ENCODE measurements at regions of chr22 and their contacts with region 1.

Region 1: DNA sequence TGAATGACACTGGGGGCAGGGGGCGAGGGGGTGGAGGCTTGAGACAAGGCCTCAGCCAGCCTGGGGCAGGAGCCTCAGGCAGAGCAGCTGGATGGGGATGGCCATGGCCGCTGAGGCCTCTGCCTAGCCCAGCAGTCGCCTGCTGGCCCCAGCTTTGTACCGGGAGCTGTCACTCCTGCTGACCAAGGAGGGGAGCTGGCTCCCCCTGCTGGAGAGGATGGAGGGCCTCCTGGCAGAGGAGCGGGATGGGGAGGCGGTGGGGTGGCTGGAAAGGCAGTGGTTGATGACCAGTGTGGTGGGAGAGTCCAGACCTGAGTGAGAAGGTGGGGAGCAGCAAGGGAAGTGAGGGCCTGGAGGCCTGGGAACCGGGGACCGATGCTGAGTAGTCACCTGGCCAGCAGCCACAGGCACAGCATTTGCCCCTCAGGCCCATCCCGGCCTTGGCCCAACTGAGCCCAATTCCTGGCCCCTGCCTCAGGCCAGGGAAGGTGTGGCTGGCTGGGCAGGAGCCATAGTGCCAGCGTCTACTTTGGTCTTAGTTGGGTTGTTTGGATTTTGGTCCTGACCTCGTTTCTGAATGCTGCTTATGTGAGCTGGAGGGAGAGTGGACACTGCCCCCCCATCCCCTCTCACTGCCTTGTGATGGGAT is 6.0 kb upstream of the SUSD2 start:
- DNase-seq: peak; percentile 91
- ATAC-seq: peak; percentile 85

Region 2: DNA sequence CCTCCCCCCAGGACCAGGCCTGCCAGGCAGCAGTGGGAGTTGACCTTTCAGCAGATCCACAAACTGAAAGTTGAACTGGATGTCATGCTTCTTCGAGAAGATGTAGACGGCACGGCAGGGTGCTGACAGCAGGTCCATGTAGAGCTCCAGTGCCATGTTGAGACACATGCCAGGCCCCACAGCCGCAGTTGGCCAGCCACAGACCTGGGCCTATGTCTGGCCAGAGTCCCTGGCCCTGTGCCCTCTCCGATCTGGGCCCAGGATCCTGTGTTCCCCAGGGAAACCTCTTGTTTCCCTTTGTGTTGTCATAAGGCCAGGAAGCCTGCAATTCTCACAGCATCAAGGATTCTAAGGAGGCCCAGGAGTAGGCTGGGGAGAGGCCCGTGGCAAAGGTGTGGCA is 170.1 kb before region 1 on chr22 and contains the start of gene GSTT4:
- intact Hi-C with region 1: loop called (anchors 10 kb)
- DNase-seq: no peak
- ATAC-seq: peak; percentile 43
- total RNA-seq, gene GSTT4: not detected

Region 3: GRCh38 chr22:24106385-24107381 is 68.6 kb before region 1 on chr22:
- intact Hi-C with region 1: loop called (anchors 10 kb)
- DNase-seq: no peak
- ATAC-seq: peak; percentile 61